Activated naive CD4-positive, alpha-beta T cell treated with anti-CD3 and anti-CD28 coated beads for 36 hours (primary cell): ENCODE measurements at regions of chr2 and their contacts with region 1.

Region 1: DNA sequence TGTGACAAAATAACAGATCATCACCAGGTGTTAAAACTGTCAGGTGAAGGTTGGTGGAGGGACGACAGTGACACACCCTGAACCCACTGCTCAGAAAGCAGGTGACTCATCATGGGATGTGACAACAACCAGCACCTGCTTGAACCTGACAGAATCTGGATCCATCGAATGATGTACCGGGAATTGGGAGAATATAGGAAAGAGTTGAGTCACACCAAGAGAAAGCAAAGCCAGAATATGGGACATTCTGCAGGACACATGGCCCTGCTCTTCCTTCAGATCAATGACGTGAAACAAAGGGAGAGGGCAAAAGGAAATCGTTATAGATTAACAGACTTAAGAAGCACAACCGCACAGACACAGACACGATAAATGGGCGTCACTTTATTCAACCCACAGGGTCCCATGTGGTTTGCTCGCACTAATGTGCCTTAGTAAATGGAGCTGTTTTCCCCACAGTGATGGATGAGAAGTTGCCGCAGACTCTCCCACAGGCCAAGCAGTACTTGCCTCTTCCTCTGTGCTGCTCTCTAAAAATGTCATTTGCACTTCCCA is 100.1 kb downstream of the CRACDL start:
- DNase-seq: peak; percentile 69
- H3K4me3 Mint-ChIP-seq: peak overlapping the region; percentile 5
- H3K27ac Mint-ChIP-seq: peak overlapping the region; percentile 62
- H3K4me1 Mint-ChIP-seq: peaks cover 26% of the 10 kb centered on the region
- H3K27me3 Mint-ChIP-seq: no peaks in the 10 kb centered on the region

Region 2: DNA sequence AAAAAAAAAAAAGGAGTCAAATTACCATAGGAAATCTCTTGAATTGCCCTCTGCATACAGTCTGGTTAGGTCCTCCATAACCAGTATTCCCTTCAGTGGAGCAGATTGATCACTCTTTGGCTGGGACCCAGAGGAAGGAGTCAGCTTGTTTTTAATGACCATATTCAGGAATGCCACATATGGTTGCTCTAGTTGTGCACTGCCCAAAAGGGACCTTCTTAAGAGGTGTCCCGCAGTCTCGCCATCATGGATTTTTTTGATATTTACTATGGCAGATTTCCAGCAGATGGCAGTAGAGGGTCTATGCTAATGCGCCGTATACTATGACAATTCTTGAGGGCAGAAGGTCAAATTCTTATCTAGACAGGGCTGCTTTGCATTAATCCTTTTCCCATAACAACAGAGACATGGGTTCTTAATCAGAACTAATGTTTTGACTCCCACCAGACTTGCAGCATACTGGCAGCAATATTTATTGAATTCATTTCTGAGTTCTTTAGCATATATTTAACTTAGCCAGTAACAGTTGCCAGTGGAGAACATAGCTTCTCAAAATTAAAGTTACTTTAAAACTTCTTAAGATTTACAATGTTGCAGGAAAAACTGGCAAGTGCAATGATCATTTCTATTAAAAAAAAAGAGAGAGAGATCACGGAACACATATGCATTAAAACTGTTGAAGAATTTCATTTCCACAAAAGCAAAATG is 423.0 kb before region 1 on chr2:
- CTCF ChIA-PET with region 1: interaction called, 6 read pairs
- intact Hi-C with region 1: loop called (anchors 1 kb)
- DNase-seq: peak; percentile 70
- H3K4me3 Mint-ChIP-seq: no peak overlapping the region
- H3K27ac Mint-ChIP-seq: no peak overlapping the region
- H3K4me1 Mint-ChIP-seq: peaks cover 17% of the 10 kb centered on the region
- H3K27me3 Mint-ChIP-seq: no peaks in the 10 kb centered on the region

Region 3: DNA sequence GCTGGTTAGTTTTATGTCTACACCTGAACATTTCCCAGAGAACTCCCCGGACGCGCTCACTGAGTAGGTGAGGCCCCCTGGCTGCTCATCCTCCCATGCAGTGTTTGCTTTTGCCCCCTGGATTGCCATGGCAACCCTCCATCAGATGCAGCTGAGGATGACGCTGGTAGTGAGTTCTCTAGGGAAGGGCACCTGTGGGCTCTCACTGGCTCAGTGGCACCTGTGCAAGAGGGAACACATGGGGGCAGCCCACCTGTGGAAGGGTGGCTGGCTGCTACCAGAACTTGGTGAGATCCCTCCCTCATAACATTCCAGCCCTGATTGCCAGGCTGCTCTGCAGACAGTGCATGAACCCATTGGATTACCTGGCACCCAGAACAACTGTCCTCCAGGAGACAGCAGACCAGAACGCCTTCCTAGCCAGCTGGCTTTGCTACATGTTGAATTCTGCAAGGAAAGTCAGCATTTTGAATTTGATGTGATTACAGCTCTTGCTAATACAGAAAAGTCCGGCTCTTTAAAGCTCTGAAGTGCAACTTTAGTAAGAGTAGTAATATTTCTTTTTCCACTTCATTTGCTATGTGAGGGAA is 249.3 kb before region 1 on chr2:
- CTCF ChIA-PET with region 1: interaction called, 5 read pairs
- intact Hi-C with region 1: loop called (anchors 5 kb)
- DNase-seq: no peak
- H3K4me3 Mint-ChIP-seq: no peak overlapping the region
- H3K27ac Mint-ChIP-seq: no peak overlapping the region
- H3K4me1 Mint-ChIP-seq: peaks cover 12% of the 10 kb centered on the region
- H3K27me3 Mint-ChIP-seq: no peaks in the 10 kb centered on the region

Region 4: GRCh38 chr2:98649135-98649991 is 186.5 kb before region 1 on chr2:
- CTCF ChIA-PET with region 1: interaction called, 39 read pairs
- intact Hi-C with region 1: loop called (anchors 1 kb)
- DNase-seq: peak; percentile 92
- H3K4me3 Mint-ChIP-seq: no peak overlapping the region
- H3K27ac Mint-ChIP-seq: peak overlapping the region; percentile 83
- H3K4me1 Mint-ChIP-seq: peaks cover 56% of the 10 kb centered on the region
- H3K27me3 Mint-ChIP-seq: no peaks in the 10 kb centered on the region

Region 5: GRCh38 chr2:98736464-98736889 is 99.4 kb before region 1 on chr2:
- CTCF ChIA-PET with region 1: no interaction called
- intact Hi-C with region 1: loop called (anchors 2 kb)
- DNase-seq: peak; percentile 65
- H3K4me3 Mint-ChIP-seq: peak overlapping the region; percentile 25
- H3K27ac Mint-ChIP-seq: peak overlapping the region; percentile 41
- H3K4me1 Mint-ChIP-seq: peaks cover 75% of the 10 kb centered on the region
- H3K27me3 Mint-ChIP-seq: no peaks in the 10 kb centered on the region

Region 6: DNA sequence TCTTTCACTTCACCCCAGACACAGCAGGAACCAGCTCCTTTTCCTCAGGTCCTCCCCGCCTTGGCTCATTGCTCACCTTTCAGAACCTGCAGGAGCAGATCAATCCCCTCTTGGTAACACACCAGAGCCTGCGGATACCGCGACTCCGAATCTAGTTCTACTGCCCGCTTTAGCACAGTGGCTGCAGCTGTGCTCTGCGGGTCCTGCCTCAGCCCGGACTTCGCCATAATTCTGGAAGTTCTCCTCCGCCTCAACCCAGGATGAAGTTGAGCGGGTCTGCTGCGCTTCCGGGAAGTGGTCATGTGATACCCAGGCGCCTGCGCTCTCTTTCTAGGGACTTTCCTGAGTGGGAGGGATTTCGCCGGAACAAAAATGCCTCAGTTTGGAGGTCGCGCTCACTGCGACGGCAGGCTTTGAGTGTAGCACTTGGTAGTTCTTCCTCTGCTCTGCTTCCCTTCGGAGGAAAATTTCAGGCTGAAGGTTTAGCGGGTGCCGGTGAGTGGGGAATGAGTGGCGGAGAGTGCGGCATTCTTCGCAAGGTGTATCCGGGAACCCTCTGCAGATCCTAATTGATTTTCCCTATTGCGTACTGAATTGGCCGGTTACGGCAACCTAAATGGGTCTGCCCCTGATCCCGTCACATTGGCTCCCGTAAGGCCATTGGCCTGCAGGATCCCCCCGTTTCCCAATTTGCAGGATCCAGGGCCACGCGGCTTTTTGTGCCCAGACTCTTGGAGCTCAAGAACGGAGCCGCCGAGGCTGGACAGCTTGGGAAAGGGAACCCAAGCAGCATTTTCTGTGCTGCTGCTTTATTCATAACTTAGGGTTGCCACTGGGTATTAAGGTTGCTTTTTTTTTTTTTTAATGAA is 345.1 kb after region 1 on chr2 and contains the starts of genes MITD1 and MRPL30:
- CTCF ChIA-PET with region 1: no interaction called
- intact Hi-C with region 1: loop called (anchors 2 kb)
- DNase-seq: peak; percentile 94
- H3K4me3 Mint-ChIP-seq: peak within 1 kb of the TSS; percentile 95
- H3K27ac Mint-ChIP-seq: peak within 1 kb of the TSS; percentile 92
- H3K4me1 Mint-ChIP-seq: peaks cover 63% of the 10 kb centered on the region
- H3K27me3 Mint-ChIP-seq: no peaks in the 10 kb centered on the region
- total RNA-seq, gene MITD1: 61.4 to 64.1 TPM
- total RNA-seq, gene MRPL30: 40.2 to 43.3 TPM